MCF 10A (cell line): ENCODE measurements at regions of chr4 and their contacts with region 1.

Region 1: GRCh38 chr4:7960790-7961655 is 21.4 kb upstream of the AFAP1 start:
- DNase-seq: peak; percentile 99
- H3K4me3 Mint-ChIP-seq: no peak overlapping the region
- H3K27ac Mint-ChIP-seq: peak overlapping the region; percentile 74
- H3K4me1 Mint-ChIP-seq: peaks cover 38% of the 10 kb centered on the region
- H3K27me3 Mint-ChIP-seq: no peaks in the 10 kb centered on the region
- CTCF ChIP-seq: no peak

Region 2: DNA sequence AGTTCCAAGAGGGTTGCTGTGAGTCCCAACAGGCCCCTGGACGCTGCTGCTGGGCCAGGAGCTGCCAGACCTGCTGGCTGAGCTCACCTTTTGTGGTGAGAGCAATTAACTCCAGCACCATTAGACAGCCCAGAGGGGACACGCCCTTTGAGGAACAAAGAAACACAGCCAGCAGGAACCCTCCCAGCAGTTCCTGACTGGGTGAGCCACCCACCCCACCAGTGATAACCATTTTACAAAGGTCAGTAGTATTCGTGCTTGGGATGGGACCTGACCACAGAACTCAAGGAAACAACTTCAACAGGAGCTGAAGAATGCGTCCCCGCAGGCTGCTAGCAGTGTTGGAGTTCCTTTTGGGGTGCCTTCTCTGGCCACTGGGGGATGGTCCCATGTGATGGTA is 17.5 kb after region 1 on chr4:
- CTCF ChIA-PET with region 1: interaction called, 3 read pairs
- POLR2A ChIA-PET with region 1: interaction called, 27 read pairs
- intact Hi-C with region 1: no loop called
- DNase-seq: peak; percentile 84
- H3K4me3 Mint-ChIP-seq: no peak overlapping the region
- H3K27ac Mint-ChIP-seq: peak overlapping the region; percentile 66
- H3K4me1 Mint-ChIP-seq: peaks cover 36% of the 10 kb centered on the region
- H3K27me3 Mint-ChIP-seq: peaks cover 3% of the 10 kb centered on the region
- CTCF ChIP-seq: no peak

Region 3: GRCh38 chr4:8039290-8039689 is 78.3 kb after region 1 on chr4:
- CTCF ChIA-PET with region 1: no interaction called
- POLR2A ChIA-PET with region 1: no interaction called
- intact Hi-C with region 1: no loop called
- DNase-seq: no peak
- H3K4me3 Mint-ChIP-seq: no peak overlapping the region
- H3K27ac Mint-ChIP-seq: no peak overlapping the region
- H3K4me1 Mint-ChIP-seq: peaks cover 11% of the 10 kb centered on the region
- H3K27me3 Mint-ChIP-seq: peaks cover 31% of the 10 kb centered on the region
- CTCF ChIP-seq: no peak